T-cell (primary cell): ENCODE measurements at regions of chr14 and their contacts with region 1.

Region 1: GRCh38 chr14:23478111-23478759 is 8.7 kb downstream of the NGDN start:
- DNase-seq: peak; percentile 9 to 81 (median 63)
- ATAC-seq: peak; percentile 43 to 74 (median 68)
- H3K4me3 ChIP-seq: no peak overlapping the region
- H3K4me3 Mint-ChIP-seq: no peak overlapping the region
- H3K27ac ChIP-seq: no peak overlapping the region
- H3K27ac Mint-ChIP-seq: peak overlapping the region in 1 of 2 donors; percentile 48
- H3K4me1 ChIP-seq: no peaks in the 10 kb centered on the region
- H3K4me1 Mint-ChIP-seq: peaks cover 7 to 18% (median 8%) of the 10 kb centered on the region in 3 donors
- H3K27me3 ChIP-seq: no peaks in the 10 kb centered on the region
- H3K27me3 Mint-ChIP-seq: no peaks in the 10 kb centered on the region

Region 2: DNA sequence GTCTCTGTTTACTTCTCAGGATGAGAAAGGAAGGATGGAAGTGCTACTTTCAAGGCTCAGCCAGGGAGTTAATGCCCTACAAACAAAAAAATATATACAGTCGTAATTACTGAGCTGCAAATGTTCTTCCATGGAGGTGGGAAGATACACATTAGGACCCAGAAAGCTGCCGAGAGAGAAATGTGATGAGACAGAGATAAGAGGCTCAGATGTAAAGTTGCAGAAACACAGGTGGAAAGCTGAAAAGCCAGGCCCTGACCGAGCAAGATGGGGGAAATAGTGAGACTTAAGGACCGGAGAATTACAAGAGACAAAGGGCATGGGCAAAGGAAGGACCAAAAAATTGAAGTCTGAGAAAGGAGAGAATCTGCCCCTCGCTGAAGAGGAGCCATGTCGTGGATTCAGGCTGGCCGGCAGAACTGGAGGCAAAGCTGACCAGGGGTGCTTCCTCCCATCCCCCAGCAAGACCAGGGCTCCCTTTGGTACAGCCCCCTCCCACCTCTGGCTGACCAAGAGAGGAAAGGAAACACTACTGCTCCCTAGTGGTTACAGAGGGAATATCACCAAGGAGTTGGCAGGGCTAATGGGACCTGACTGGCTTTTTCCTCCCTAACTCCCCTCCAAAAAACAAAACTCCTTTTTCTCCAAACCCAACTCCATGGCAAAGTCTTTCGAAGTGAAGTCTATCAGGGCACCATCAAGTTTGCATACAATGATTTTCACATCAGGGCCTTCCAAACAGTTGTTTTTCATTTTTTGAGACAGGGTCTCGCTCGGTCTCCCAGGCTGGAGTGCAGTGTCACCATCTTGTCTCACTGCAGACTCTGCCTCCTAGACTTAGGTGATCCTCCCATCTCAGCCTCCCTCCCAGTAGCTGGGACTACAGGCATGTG is 61.3 kb after region 1 on chr14:
- CTCF ChIA-PET with region 1: interaction called, 10 to 11 read pairs
- POLR2A ChIA-PET with region 1: no interaction called
- DNase-seq: peak in 6 of 35 experiments; percentile 9 to 69 (median 26)
- ATAC-seq: peak; percentile 57 to 77 (median 68)
- H3K4me3 ChIP-seq: no peak overlapping the region
- H3K4me3 Mint-ChIP-seq: no peak overlapping the region
- H3K27ac ChIP-seq: no peak overlapping the region
- H3K27ac Mint-ChIP-seq: no peak overlapping the region
- H3K4me1 ChIP-seq: peaks cover 0 to 3% of the 10 kb centered on the region in 2 experiments
- H3K4me1 Mint-ChIP-seq: no peaks in the 10 kb centered on the region
- H3K27me3 ChIP-seq: peaks cover 0 to 7% of the 10 kb centered on the region in 2 experiments
- H3K27me3 Mint-ChIP-seq: peaks cover 0 to 6% of the 10 kb centered on the region in 2 donors

Region 3: DNA sequence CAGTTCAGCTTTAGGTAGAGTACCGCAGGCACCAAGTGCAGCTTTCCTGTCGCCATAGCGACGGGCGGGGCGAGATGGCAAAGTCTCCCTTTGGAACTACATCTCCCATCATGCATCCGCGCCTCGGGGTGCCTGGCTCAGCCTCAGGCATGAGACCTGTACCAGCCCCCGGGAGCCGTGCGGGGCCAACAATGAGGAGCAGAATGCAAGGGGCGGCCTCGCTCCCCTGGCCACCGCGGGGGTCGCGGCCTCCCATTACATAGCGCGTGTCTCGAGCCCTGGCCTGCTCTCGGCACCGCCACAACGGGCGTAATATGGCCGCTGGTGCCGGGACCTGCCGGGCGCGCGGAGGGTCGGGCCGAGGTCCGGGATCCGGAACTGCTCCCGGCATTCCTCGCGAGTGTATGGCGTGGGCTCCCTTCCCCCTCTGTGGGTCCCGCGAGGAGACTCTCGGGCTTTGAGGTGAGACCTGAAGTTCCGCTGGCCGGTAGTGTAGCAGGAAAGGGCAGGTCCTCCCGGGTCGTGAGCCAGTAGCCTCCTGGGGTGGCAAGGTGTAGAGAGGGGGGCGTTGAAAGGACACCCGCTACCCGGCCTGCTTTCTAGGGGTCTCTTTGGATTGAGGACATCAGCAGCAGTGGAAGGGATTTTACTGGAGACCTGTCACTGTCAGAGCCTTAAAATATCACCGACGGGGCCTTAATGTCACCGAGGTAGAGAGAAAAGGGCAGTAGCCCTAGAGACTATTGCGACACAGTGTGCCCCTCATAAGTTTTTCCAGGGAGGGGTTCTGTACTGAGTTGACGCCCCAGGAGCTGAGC is 77.9 kb after region 1 on chr14 and contains the start of gene THTPA:
- CTCF ChIA-PET with region 1: interaction called, 8 to 107 read pairs
- POLR2A ChIA-PET with region 1: interaction called in 1 of 2 experiments, 3 read pairs
- DNase-seq: peak; percentile 86 to 98 (median 93)
- ATAC-seq: peak; percentile 85 to 90 (median 88)
- H3K4me3 ChIP-seq: peak within 1 kb of the TSS; percentile 75 to 87
- H3K4me3 Mint-ChIP-seq: peak within 1 kb of the TSS; percentile 90 to 97 (median 96)
- H3K27ac ChIP-seq: peak within 1 kb of the TSS; percentile 78
- H3K27ac Mint-ChIP-seq: peak within 1 kb of the TSS; percentile 90 to 96
- H3K4me1 ChIP-seq: peaks cover 6 to 48% of the 10 kb centered on the region in 2 experiments
- H3K4me1 Mint-ChIP-seq: peaks cover 33 to 45% (median 41%) of the 10 kb centered on the region in 3 donors
- H3K27me3 ChIP-seq: peaks cover 0 to 5% of the 10 kb centered on the region in 2 experiments
- H3K27me3 Mint-ChIP-seq: no peaks in the 10 kb centered on the region
- total RNA-seq, gene THTPA: 13.3 to 26.4 (median 20.5) TPM

Region 4: DNA sequence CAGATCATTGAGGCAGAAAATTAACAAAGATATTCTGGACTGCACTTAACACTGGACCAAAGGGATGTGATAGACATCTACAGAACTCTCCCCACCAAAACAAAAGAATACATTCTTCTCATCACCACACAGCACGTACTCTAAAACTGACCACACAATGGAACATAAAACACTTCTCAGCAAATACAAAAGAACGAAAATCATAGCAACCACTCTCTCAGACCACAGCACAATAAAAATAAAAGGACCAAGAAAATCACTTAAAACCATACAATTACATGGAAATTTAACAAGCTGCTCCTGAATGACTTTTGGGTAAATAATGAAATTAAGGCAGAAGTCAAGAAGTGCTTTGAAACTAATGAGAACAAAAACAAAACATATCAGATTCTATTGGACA is 1825.7 kb after region 1 on chr14:
- CTCF ChIA-PET with region 1: no interaction called
- POLR2A ChIA-PET with region 1: no interaction called
- DNase-seq: no peak
- ATAC-seq: no peak
- H3K4me3 ChIP-seq: no peak overlapping the region
- H3K4me3 Mint-ChIP-seq: no peak overlapping the region
- H3K27ac ChIP-seq: no peak overlapping the region
- H3K27ac Mint-ChIP-seq: no peak overlapping the region
- H3K4me1 ChIP-seq: no peaks in the 10 kb centered on the region
- H3K4me1 Mint-ChIP-seq: no peaks in the 10 kb centered on the region
- H3K27me3 ChIP-seq: no peaks in the 10 kb centered on the region
- H3K27me3 Mint-ChIP-seq: peaks cover 1 to 4% of the 10 kb centered on the region in 2 donors